ENCODE measurements at regions of chr5 and their contacts with region 1.

Region 1: GRCh38 chr5:100623719-100624118 is 88.5 kb downstream of the FAM174A start:
- DNase-seq: no peak
- ATAC-seq: peak; percentile 68
- H3K4me3 Mint-ChIP-seq: no peak overlapping the region
- H3K27ac Mint-ChIP-seq: no peak overlapping the region
- H3K4me1 Mint-ChIP-seq: no peaks in the 10 kb centered on the region
- H3K27me3 Mint-ChIP-seq: no peaks in the 10 kb centered on the region
- CTCF ChIP-seq: no peak

Region 2: DNA sequence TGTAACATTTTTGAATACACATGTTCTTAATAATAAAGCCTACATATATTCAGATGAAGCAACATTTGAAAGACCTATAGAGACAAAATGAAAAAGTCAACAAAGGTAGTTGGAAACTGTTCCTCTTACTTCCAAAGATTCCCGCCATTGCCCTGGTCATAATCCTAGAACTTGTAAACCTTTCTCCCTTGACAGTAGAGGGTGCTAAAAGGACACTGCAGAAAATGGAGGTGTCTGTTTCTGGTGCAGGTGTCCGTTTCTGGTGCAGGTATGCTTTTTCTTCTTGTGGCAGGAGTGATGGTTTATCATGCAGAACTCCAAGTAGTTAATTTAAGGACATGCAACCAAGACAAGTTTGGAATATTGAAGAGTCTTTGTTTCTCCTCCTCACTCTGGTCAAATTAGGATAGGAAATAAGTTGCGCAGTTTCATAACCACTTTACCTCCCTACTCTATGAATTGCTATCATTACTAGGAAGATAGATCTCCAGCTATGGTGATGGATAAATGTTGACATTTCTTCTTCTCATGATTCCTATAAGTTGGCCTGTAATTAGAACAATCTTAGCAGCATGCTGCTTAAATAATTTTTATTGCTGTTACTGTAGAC is 144.5 kb before region 1 on chr5:
- CTCF ChIA-PET with region 1: no interaction called
- POLR2A ChIA-PET with region 1: no interaction called
- intact Hi-C with region 1: loop called (anchors 5 kb)
- DNase-seq: no peak
- ATAC-seq: no peak
- H3K4me3 Mint-ChIP-seq: no peak overlapping the region
- H3K27ac Mint-ChIP-seq: no peak overlapping the region
- H3K4me1 Mint-ChIP-seq: no peaks in the 10 kb centered on the region
- H3K27me3 Mint-ChIP-seq: peaks cover 3% of the 10 kb centered on the region
- CTCF ChIP-seq: no peak

Region 3: DNA sequence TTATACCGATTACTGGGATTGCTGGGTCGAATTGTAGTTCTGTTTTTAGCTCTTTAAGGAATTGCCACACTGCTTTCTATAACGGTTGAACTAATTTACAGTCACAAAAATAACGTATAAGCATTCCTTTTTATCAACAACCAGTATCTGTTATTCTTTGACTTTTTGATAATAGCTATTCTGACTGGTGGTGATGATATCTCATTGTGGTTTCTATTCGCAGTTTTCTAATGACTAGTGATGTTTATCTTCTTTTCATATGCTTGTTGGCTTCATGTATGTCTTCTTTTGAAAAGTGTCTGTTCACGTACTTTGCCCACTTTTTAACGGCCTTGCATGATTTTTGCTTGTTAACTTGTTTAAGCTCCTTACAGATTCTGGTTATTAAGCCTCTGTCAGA is 14.1 kb before region 1 on chr5:
- CTCF ChIA-PET with region 1: no interaction called
- POLR2A ChIA-PET with region 1: no interaction called
- intact Hi-C with region 1: no loop called
- DNase-seq: no peak
- ATAC-seq: no peak
- H3K4me3 Mint-ChIP-seq: no peak overlapping the region
- H3K27ac Mint-ChIP-seq: no peak overlapping the region
- H3K4me1 Mint-ChIP-seq: no peaks in the 10 kb centered on the region
- H3K27me3 Mint-ChIP-seq: peaks cover 9% of the 10 kb centered on the region
- CTCF ChIP-seq: no peak

Region 4: GRCh38 chr5:100840384-100840783 is 216.7 kb after region 1 on chr5:
- CTCF ChIA-PET with region 1: no interaction called
- POLR2A ChIA-PET with region 1: no interaction called
- intact Hi-C with region 1: no loop called
- DNase-seq: no peak
- ATAC-seq: peak; percentile 90
- H3K4me3 Mint-ChIP-seq: peak overlapping the region; percentile 63
- H3K27ac Mint-ChIP-seq: peak overlapping the region; percentile 86
- H3K4me1 Mint-ChIP-seq: peaks cover 84% of the 10 kb centered on the region
- H3K27me3 Mint-ChIP-seq: no peaks in the 10 kb centered on the region
- CTCF ChIP-seq: no peak

Region 5: GRCh38 chr5:101045689-101046088 is 422.0 kb after region 1 on chr5:
- CTCF ChIA-PET with region 1: interaction called, 3 read pairs
- POLR2A ChIA-PET with region 1: no interaction called
- intact Hi-C with region 1: loop called (anchors 1 kb)
- DNase-seq: no peak
- ATAC-seq: no peak
- H3K4me3 Mint-ChIP-seq: no peak overlapping the region
- H3K27ac Mint-ChIP-seq: no peak overlapping the region
- H3K4me1 Mint-ChIP-seq: no peaks in the 10 kb centered on the region
- H3K27me3 Mint-ChIP-seq: no peaks in the 10 kb centered on the region
- CTCF ChIP-seq: no peak

Region 6: DNA sequence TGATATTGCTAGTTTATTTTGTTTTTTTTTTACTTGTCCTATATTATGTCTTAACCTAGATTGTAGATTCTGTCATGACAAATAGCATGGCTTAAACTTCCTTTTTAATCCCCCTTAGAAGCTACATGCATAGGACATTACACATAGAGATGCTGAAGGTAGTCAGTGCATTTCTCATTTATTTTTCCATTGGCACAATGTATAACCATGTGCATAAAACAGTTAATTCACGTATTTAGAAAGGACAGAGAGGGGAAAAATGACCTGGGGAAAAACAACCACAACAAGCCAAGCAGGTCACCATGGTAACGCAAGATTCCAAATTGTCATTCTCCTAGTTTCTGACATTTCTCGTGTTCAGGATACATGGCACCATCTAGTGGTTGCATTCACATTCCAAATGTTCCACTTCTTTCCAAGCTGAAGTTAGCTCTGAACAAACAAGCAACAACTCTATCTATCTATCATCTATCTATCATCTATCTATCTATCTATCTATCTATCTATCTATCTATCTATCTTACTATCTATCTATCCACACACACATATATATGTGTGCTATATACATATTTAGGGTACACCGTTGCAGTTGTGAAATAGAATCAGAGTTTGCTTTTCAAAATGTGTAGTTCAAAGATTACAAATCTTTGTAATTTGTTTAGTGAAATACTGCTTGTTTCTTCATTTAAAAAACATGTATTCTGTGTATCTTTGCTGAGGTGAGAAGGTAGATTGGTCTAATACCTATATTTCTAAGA is 766.6 kb after region 1 on chr5:
- CTCF ChIA-PET with region 1: interaction called, 11 read pairs
- POLR2A ChIA-PET with region 1: no interaction called
- intact Hi-C with region 1: loop called (anchors 1 kb)
- DNase-seq: no peak
- ATAC-seq: no peak
- H3K4me3 Mint-ChIP-seq: no peak overlapping the region
- H3K27ac Mint-ChIP-seq: no peak overlapping the region
- H3K4me1 Mint-ChIP-seq: no peaks in the 10 kb centered on the region
- H3K27me3 Mint-ChIP-seq: no peaks in the 10 kb centered on the region
- CTCF ChIP-seq: no peak

Region 7: GRCh38 chr5:101590384-101590783 is 966.7 kb after region 1 on chr5:
- CTCF ChIA-PET with region 1: no interaction called
- POLR2A ChIA-PET with region 1: no interaction called
- intact Hi-C with region 1: loop called (anchors 5 kb)
- DNase-seq: no peak
- ATAC-seq: no peak
- H3K4me3 Mint-ChIP-seq: no peak overlapping the region
- H3K27ac Mint-ChIP-seq: no peak overlapping the region
- H3K4me1 Mint-ChIP-seq: no peaks in the 10 kb centered on the region
- H3K27me3 Mint-ChIP-seq: no peaks in the 10 kb centered on the region
- CTCF ChIP-seq: no peak

Region 8: GRCh38 chr5:101678481-101679193 is 1054.9 kb after region 1 on chr5:
- CTCF ChIA-PET with region 1: no interaction called
- POLR2A ChIA-PET with region 1: no interaction called
- intact Hi-C with region 1: loop called (anchors 1 kb)
- DNase-seq: no peak
- ATAC-seq: peak; percentile 56
- H3K4me3 Mint-ChIP-seq: no peak overlapping the region
- H3K27ac Mint-ChIP-seq: no peak overlapping the region
- H3K4me1 Mint-ChIP-seq: no peaks in the 10 kb centered on the region
- H3K27me3 Mint-ChIP-seq: no peaks in the 10 kb centered on the region
- CTCF ChIP-seq: no peak

Region 9: DNA sequence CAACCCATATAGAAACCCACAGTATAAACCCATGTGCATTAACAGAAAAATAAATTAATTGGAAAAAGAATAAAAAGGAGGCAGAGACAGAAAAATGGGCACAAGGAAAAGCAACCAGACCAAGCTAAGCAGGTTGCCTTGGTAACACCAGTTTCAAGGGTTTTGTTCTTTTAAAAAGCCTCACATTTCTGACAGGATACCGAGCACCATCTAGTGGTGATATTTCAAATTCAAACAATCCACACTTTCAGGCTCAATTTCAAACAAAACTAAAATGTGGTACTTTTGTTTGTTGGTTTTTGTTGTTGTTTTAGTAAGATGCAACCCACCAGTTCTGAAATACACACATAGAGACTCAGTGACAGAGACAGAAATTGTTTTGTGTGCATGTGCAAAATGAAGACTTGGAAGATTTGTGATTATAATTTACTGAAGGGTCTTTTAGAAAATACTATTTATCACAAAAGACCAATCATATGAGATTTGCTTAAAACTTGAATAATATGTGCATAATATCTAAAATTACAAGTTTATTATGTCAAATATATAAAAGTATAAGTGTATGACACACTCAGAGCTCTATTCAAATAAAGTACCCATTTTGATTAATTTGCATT is 1354.1 kb after region 1 on chr5:
- CTCF ChIA-PET with region 1: no interaction called
- POLR2A ChIA-PET with region 1: no interaction called
- intact Hi-C with region 1: loop called (anchors 10 kb)
- DNase-seq: no peak
- ATAC-seq: no peak
- H3K4me3 Mint-ChIP-seq: no peak overlapping the region
- H3K27ac Mint-ChIP-seq: no peak overlapping the region
- H3K4me1 Mint-ChIP-seq: no peaks in the 10 kb centered on the region
- H3K27me3 Mint-ChIP-seq: no peaks in the 10 kb centered on the region
- CTCF ChIP-seq: no peak